Activated T-helper 1 cell treated with anti-CD3 and anti-CD28 coated beads, Interleukin-12 subunit alpha, Interleukin-12 subunit beta, Interleukin-2, Interleukin-4 antibody, amounts not matched to agents 30 ng/mL and 10 ng/mL and 1 ng/mL, durations not matched to agents 14 hours and 24 hours and 36 hours (primary cell): ENCODE measurements at regions of chr2 and their contacts with region 1.

Region 1: DNA sequence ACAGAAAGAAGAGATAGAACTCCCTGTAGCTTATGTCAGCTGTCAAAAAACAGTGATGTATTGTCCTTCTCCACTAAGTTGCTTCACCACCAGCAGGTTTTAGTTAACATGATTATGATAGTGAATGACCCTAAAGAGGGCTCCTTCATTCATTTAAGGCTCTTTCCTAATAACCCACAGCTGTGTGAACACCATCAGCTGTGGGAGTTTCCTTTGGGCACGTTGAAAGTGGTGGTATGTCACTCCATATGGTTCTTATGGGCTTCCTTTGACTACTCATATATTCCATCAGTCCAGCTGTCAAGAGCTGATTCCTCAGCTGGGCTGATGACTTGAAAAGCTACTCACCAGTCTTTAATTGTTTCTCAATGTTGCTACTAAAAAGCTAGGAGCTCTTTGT is 210.3 kb downstream of the UBE2E3 start:
- DNase-seq: no peak
- H3K4me3 Mint-ChIP-seq: no peak overlapping the region
- H3K27ac Mint-ChIP-seq: no peak overlapping the region
- H3K4me1 Mint-ChIP-seq: peaks cover 28% of the 10 kb centered on the region
- H3K27me3 Mint-ChIP-seq: no peaks in the 10 kb centered on the region

Region 2: GRCh38 chr2:181178823-181179412 is 11.8 kb before region 1 on chr2:
- intact Hi-C with region 1: loop called (anchors 2 kb)
- DNase-seq: no peak
- H3K4me3 Mint-ChIP-seq: peak overlapping the region; percentile 7
- H3K27ac Mint-ChIP-seq: peak overlapping the region; percentile 57
- H3K4me1 Mint-ChIP-seq: peaks cover 56% of the 10 kb centered on the region
- H3K27me3 Mint-ChIP-seq: no peaks in the 10 kb centered on the region